Activated B cell treated with CpG ODN at 0.5 μM for 24 hours (primary cell): ENCODE measurements at regions of chr4 and their contacts with region 1.

Region 1: DNA sequence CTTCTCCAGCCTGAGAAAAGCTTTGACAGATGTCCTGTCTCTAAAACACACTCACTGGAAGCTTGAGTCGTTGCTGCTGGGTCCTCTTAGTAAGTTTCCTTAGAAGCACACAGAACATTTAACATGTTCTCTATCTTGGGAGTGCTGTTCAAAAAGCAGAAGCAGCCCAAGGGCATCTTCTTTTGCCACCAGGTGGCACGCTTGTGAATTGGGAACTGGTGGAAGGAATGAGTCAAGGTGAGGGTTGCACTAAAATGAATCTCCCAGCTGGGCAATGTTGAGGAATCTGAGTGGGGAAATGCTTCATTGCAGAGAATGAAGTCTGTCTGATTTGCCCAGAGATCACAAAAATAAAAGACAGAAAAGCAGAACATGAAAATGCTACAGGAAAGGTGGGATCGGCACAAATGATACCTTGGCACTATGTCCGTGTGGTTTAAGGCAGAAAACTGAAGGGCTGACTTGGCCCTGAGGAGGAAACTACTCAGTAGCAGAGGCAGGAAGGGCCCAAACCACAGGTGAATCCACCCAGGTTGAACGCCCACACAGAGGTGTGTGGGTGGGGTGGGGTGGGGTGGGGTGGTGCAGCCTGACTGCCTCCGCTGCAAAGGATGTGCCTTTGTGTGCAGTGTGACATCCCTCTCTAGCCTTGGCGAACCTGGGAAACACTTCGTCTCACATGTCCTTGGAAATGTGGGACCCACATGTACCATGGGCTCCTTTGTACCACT is 26.0 kb downstream of the KIT start:
- DNase-seq: no peak
- ATAC-seq: no peak
- H3K4me3 Mint-ChIP-seq: peak overlapping the region; percentile 69
- H3K27ac Mint-ChIP-seq: no peak overlapping the region
- H3K4me1 Mint-ChIP-seq: peaks cover 44% of the 10 kb centered on the region
- H3K27me3 Mint-ChIP-seq: no peaks in the 10 kb centered on the region
- CTCF ChIP-seq: no peak

Region 2: DNA sequence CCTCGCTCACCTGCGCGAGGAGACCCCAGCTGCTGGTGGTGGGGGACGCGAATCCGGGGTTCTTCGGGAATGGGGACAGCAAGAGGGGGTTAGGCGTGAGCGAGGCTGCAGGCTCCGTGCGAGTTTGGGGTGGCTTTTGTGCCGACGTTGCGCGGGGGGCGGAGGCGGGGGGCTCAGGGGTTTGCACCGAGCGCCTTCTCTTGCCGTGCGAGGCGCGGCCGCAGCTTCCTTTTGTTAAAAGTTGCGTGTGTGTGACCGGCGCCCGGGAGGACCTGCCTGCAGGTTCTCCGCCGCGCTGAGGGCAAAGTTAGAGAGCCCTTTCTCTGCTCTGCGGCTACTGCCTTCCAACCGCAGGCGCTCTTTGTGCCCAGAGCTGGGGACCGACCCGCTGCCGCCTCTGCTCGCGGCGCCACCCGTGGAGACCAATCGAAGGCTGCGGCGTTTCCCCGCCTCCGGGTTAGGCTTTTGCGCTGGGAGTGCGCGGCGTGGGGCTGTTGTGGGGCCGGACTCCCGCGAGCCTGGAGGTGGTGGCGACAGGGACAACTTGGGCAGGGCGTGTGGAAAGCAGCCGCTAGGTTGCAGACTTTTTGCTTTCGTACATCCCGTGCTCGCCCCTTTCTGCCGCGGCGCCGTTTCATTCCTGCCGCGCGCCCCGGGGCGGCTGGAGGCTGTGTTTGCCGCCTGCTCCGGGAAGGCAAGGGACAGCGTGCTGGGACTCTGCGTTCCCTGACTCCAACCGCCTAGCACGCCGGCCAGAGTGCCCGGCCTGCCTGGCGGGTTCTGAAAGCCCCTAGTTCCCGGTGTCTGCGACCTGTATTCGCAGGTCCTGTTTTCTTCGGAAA is 25.3 kb before region 1 on chr4:
- CTCF ChIA-PET with region 1: interaction called, 3 read pairs
- POLR2A ChIA-PET with region 1: no interaction called
- intact Hi-C with region 1: loop called (anchors 2 kb)
- DNase-seq: no peak
- ATAC-seq: peak; percentile 37
- H3K4me3 Mint-ChIP-seq: peak overlapping the region; percentile 76
- H3K27ac Mint-ChIP-seq: no peak overlapping the region
- H3K4me1 Mint-ChIP-seq: peaks cover 25% of the 10 kb centered on the region
- H3K27me3 Mint-ChIP-seq: peaks cover 52% of the 10 kb centered on the region
- CTCF ChIP-seq: no peak

Region 3: DNA sequence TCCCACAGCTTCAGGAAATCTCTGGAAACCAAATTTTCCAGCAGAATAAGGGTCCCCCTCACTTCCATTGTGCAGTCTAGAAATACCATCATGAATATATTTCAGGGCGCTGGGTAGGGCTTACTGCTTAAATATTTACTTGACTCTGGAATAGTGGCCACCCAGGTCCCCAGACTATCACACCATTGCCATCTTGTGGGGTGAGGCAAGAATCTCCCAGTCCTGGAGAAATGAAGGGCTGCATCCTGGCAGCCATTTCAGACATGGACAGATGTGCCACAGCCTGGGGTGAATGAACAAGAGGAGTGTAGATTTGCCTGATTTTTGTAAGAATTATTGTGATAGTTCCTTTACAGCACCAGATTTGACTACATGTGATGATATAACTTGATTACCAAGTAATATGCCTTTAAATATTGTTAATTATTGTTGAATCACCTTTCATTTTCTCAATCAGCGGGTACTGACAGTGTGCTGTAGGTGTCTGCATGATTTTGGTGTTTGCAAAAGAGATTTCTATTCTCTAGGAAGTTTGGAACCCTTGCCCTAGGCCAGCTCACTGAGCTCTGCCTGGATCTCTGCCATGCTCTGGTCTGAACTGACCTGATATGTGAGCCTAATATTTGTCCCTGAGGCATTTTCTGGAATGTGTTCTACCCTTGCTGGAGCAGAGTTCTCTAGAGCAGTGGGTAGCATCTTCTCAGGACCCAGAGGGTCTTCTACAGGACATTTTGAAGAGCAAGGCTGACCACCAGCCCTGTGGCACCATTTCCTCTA is 157.4 kb after region 1 on chr4:
- CTCF ChIA-PET with region 1: no interaction called
- POLR2A ChIA-PET with region 1: no interaction called
- intact Hi-C with region 1: loop called (anchors 1 kb)
- DNase-seq: no peak
- ATAC-seq: no peak
- H3K4me3 Mint-ChIP-seq: no peak overlapping the region
- H3K27ac Mint-ChIP-seq: no peak overlapping the region
- H3K4me1 Mint-ChIP-seq: no peaks in the 10 kb centered on the region
- H3K27me3 Mint-ChIP-seq: peaks cover 7% of the 10 kb centered on the region
- CTCF ChIP-seq: no peak

Region 4: DNA sequence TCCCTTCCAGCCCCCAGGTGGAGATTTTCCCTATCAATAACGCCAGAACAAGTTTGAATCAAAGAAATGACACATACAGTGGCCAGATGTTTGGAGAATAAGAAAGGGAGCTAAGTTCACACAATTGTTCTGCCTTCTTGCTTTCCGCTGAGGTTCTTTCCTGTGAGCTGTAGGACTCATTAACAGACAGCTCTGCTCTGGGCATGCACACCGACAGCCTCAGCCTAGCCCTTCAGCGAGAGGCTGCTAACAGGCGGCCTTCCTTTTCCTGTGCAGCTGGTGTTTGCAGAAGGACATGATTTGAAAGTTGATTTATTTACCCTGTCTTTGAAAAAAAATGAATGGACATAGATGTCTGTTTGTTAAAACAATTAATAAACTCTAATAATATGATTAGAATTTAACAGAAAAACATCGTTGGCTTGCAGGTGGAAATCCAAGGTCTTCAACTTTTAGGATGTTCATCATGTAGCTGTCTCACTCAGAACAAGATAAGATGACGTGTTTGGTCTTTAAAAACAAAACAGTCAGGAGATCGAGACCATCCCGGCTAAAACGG is 258.3 kb after region 1 on chr4:
- CTCF ChIA-PET with region 1: no interaction called
- POLR2A ChIA-PET with region 1: interaction called, 7 read pairs
- intact Hi-C with region 1: loop called (anchors 5 kb)
- DNase-seq: no peak
- ATAC-seq: peak; percentile 71
- H3K4me3 Mint-ChIP-seq: peak overlapping the region; percentile 67
- H3K27ac Mint-ChIP-seq: peak overlapping the region; percentile 55
- H3K4me1 Mint-ChIP-seq: peaks cover 36% of the 10 kb centered on the region
- H3K27me3 Mint-ChIP-seq: peaks cover 5% of the 10 kb centered on the region
- CTCF ChIP-seq: no peak

Region 5: DNA sequence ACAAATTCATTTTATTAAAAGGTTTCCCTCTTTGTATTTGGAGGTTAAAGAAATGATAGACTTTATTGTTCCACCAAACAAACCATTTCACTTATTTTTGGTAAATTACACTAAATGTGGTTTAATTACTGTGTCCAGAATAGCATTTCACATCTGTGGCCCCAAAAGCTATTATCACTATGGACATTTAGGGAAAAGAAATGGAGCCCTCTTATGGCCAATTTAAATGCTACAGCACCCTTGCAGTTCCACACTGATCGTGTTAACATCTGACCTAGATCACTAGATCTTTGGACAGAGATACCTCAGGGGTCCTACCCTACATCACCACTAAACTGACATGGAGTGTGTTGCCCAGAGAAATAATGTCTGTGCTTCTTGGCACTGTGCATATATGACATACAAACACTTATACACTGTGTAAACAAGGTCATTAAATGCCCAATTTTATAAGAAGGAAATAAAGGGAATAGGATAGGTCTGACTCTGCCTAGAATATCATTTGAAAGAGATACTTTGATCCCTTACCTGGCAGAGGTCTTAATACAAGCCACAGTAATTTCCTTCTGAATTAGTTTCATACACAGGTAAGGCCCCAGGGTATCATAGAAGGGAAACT is 277.7 kb after region 1 on chr4:
- CTCF ChIA-PET with region 1: interaction called, 11 read pairs
- POLR2A ChIA-PET with region 1: no interaction called
- intact Hi-C with region 1: loop called (anchors 1 kb)
- DNase-seq: no peak
- ATAC-seq: no peak
- H3K4me3 Mint-ChIP-seq: no peak overlapping the region
- H3K27ac Mint-ChIP-seq: no peak overlapping the region
- H3K4me1 Mint-ChIP-seq: no peaks in the 10 kb centered on the region
- H3K27me3 Mint-ChIP-seq: peaks cover 6% of the 10 kb centered on the region
- CTCF ChIP-seq: no peak